IMR-90 (cell line): ENCODE measurements at regions of chr1 and their contacts with region 1.

Region 1: DNA sequence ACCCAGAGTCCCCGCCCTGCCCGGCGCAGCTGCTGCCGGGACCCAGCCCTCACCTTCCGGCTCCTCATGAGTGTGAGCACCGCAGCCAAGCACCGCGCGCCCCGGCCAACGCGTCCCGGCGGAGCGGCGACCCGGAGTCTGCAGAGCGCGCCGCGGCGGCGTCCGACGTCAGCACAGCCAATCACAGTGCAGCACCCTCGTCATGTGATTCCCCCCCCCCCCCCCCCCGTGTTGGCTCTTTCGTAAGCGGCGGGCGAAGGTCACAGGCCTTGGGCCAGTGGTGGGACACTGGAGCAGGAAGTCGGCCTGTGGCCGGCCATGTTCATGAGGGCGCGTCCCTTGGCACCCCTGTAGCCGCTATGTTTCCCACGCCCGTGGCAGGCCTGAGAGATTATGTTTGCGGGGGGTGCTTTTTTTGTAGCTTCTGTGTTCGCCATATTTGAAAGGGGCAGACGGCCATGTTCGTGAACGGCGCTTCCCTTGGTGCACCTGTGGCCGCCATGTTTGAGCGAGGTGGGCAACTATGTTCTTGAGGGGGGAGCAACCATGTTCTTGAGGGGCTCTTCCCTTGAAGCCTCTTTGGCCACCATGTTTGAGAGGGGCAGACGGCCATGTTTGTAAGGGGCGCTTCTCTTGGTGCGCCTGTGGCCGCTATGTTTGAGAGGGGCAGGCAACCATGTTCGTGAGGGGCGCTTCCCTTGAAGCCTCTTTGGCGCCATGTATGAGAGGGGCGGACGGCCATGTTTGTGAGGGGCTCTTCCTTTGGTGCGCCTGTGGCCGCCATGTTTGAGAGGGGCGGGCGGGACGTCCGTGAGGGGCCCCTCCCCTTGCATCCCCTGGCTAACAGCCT is at the start of gene C1orf174:
- DNase-seq: peak; percentile 98
- ATAC-seq: peak; percentile 88
- H3K4me3 ChIP-seq: peak within 1 kb of the TSS; percentile 60
- H3K27ac ChIP-seq: peak within 1 kb of the TSS; percentile 78
- H3K4me1 ChIP-seq: peaks cover 9% of the 10 kb centered on the region
- H3K27me3 ChIP-seq: no peaks in the 10 kb centered on the region
- CTCF ChIP-seq: no peak
- POLR2A ChIP-seq: peak; percentile 44; the same call in 1 of the 2 replicates
- RAD21 ChIP-seq: no peak
- total RNA-seq, gene C1orf174: 45.7 and 49.7 TPM in 2 replicates

Region 2: DNA sequence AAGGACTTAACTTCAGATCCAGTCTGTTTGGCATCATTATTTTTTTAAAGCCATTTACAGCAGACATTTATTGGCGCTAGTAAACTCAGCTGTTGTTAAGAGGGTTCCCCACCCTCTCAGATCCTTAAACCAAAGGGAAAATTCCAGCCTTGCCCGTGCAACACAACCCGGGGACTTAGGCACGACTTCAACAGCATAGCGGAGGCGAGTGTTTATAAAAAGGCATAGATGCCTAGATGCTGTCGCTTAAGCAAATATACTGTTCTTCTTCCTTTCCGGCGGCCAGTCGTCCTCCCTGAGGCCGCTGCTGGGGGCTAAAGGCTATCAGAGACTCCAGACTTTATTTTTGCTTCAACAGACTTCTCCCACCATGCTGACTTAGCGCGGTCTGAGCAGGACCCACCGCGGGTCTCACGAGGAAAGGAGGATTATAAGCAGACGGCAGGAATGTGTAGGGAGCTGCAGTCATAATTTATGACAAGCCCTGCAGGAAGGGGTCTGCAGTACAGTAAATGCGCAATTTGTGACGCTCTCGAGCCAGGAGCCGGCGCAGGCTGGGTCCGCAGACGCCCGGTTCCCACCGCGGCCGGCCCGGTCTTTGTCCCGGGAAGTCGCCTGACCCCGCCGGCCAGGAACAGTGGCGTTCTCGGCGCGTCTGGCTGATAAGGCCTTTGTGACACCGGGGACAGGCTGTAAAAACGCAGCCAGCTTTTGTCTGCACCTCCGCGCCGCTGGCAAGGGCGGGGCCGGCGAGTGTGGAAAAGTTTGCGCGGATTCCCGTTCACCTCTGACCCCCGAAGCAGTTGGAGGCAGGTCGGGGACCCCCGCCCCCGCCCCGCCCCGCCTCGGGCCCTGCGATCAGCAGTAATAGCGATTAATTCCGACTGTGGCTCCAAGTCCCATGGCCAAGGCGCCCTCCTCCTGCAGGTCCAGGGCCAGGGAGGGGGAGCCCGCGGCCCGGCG is 507.0 kb before region 1 on chr1:
- CTCF ChIA-PET with region 1: no interaction called
- POLR2A ChIA-PET with region 1: no interaction called
- dilution Hi-C with region 1: no loop called
- in situ Hi-C with region 1: no loop called
- intact Hi-C with region 1: no loop called
- DNase-seq: peak; percentile 12
- ATAC-seq: peak; percentile 79
- H3K4me3 ChIP-seq: no peak overlapping the region
- H3K27ac ChIP-seq: no peak overlapping the region
- H3K4me1 ChIP-seq: peaks cover 5% of the 10 kb centered on the region; the same call in 1 of the 2 replicates
- H3K27me3 ChIP-seq: peaks cover 67% of the 10 kb centered on the region
- CTCF ChIP-seq: no peak
- POLR2A ChIP-seq: no peak
- RAD21 ChIP-seq: no peak

Region 3: DNA sequence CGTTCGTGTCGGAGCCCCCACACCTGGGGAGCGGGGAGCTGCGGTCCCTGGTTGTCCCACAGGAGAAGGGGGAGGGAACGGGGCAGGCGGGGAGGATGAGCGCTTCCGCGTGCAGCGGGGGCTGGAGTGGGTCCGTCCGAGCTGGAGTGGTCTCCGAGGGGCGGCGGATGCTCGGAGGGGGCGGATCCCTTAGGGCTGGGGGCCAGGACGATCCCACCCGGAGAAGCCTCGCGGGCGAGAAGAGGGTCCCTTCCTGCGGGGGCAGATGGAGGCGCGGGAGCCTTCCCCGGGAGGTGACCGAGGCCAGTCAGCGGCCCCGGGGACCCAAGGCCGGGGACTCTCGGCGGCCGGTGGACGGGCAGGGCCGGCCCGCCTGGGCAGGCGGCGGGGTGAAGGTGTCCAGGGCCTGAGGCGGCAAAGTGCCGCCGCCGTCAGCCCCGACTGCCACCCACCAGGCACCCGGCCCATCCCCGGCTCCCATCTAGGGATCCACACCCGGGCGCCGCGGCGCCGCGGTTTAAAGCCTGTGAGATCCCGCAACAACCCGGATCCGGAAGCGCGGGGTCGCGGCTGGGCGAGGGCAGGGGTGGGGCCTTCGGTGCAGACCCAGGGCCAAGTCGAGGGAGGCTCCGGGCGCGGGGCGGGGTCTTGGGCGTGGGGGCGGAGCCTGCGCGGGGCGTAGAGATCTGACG is 153.4 kb before region 1 on chr1:
- CTCF ChIA-PET with region 1: no interaction called
- POLR2A ChIA-PET with region 1: no interaction called
- dilution Hi-C with region 1: no loop called
- in situ Hi-C with region 1: no loop called
- intact Hi-C with region 1: no loop called
- DNase-seq: peak; percentile 55
- ATAC-seq: peak; percentile 99
- H3K4me3 ChIP-seq: peak overlapping the region; percentile 63
- H3K27ac ChIP-seq: no peak overlapping the region; the same call in 1 of the 2 replicates
- H3K4me1 ChIP-seq: peaks cover 8% of the 10 kb centered on the region; the same call in 1 of the 2 replicates
- H3K27me3 ChIP-seq: peaks cover 11% of the 10 kb centered on the region
- CTCF ChIP-seq: no peak
- POLR2A ChIP-seq: peak; percentile 37; the same call in 1 of the 2 replicates
- RAD21 ChIP-seq: no peak

Region 4: DNA sequence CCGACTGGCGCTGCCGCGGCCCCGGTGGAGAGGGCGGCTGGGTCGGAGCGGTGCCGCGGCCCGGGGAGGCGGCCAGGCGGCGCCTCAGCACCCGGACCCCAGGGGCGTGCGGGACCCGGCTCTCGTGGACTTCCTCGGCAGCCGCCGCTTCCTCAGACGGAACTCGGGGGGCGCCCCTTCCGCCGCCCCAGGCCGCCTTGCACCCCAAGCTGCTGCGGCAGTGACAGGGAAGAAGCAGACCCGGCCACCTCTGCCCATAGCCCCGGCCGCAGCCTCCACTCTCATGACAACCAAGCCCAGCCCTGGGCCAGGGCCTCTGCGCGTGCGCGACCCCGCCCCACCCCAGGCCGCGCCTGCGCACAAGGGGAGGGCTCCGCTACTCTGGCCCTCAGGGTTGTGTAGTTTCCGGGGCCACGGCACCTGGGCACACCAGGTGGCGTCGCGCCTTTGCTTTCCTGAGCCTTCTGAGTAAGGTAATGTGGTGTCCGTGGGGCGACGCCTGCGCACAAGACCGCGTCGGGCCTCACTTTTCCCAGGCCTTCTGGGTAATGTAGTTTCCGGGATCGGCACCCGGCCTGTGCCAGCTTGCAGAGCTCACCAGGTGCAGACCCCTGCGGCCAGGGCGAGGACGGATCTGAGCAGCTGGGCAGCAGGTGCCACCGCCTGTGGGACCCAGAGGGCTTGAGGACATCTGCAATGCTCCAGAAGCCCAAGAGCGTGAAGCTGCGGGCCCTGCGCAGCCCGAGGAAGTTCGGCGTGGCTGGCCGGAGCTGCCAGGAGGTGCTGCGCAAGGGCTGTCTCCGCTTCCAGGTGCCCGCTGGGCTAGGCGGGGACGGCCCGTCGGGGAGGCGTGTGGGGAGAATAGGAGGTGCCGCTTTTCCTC is 43.2 kb before region 1 on chr1 and contains the starts of genes CEP104 and DFFB:
- CTCF ChIA-PET with region 1: interaction called, 4 read pairs
- POLR2A ChIA-PET with region 1: no interaction called
- dilution Hi-C with region 1: no loop called
- in situ Hi-C with region 1: no loop called
- intact Hi-C with region 1: loop called (anchors 2 kb)
- DNase-seq: peak; percentile 67
- ATAC-seq: peak; percentile 90
- H3K4me3 ChIP-seq: peak within 1 kb of the TSS; percentile 98
- H3K27ac ChIP-seq: peak within 1 kb of the TSS; percentile 88
- H3K4me1 ChIP-seq: peaks cover 5% of the 10 kb centered on the region; the same call in 1 of the 2 replicates
- H3K27me3 ChIP-seq: no peaks in the 10 kb centered on the region
- CTCF ChIP-seq: no peak
- POLR2A ChIP-seq: no peak
- RAD21 ChIP-seq: no peak
- total RNA-seq, gene CEP104: 14.3 and 20.0 TPM in 2 replicates
- total RNA-seq, gene DFFB: 6.7 and 7.3 TPM in 2 replicates

Region 5: GRCh38 chr1:4603295-4604110 is 703.2 kb after region 1 on chr1:
- CTCF ChIA-PET with region 1: no interaction called
- POLR2A ChIA-PET with region 1: no interaction called
- dilution Hi-C with region 1: no loop called
- in situ Hi-C with region 1: no loop called
- intact Hi-C with region 1: no loop called
- DNase-seq: no peak
- ATAC-seq: no peak
- H3K4me3 ChIP-seq: no peak overlapping the region
- H3K27ac ChIP-seq: no peak overlapping the region
- H3K4me1 ChIP-seq: no peaks in the 10 kb centered on the region
- H3K27me3 ChIP-seq: no peaks in the 10 kb centered on the region
- CTCF ChIP-seq: no peak
- POLR2A ChIP-seq: no peak
- RAD21 ChIP-seq: no peak